ENCODE measurements at regions of chr1 and their contacts with region 1.

Region 1: GRCh38 chr1:240149484-240150094 is 57.9 kb downstream of the FMN2 start:
- DNase-seq: no peak
- H3K4me3 ChIP-seq: no peak overlapping the region
- H3K27ac ChIP-seq: no peak overlapping the region
- H3K4me1 ChIP-seq: no peaks in the 10 kb centered on the region
- H3K27me3 ChIP-seq: peaks cover 17% of the 10 kb centered on the region
- CTCF ChIP-seq: peak; percentile 72

Region 2: DNA sequence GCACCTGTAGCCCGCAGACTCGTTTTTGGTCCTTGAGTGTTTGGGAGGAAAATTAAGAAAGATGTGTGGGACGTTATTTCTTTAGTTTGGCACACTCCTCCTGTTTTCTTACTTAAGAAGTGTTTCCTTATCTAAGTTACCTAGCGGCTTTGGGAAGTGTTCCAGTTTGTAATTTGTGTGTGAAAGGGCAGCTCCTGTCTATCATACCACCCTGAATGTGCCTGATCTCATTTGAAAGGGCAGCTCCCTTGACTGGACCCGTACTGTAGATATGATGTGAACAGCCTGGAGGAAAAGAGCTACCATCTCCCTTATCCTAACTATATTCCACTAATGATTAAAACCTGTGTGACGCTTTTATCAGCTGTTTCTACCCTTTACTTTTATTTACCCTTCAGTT is 448.9 kb before region 1 on chr1:
- intact Hi-C with region 1: no loop called
- DNase-seq: no peak
- H3K4me3 ChIP-seq: no peak overlapping the region
- H3K27ac ChIP-seq: no peak overlapping the region
- H3K4me1 ChIP-seq: no peaks in the 10 kb centered on the region
- H3K27me3 ChIP-seq: no peaks in the 10 kb centered on the region
- CTCF ChIP-seq: no peak

Region 3: GRCh38 chr1:240027059-240027462 is 122.5 kb before region 1 on chr1:
- intact Hi-C with region 1: loop called (anchors 5 kb)
- DNase-seq: no peak
- H3K4me3 ChIP-seq: no peak overlapping the region
- H3K27ac ChIP-seq: no peak overlapping the region
- H3K4me1 ChIP-seq: no peaks in the 10 kb centered on the region
- H3K27me3 ChIP-seq: peaks cover 6% of the 10 kb centered on the region
- CTCF ChIP-seq: peak; percentile 87

Region 4: DNA sequence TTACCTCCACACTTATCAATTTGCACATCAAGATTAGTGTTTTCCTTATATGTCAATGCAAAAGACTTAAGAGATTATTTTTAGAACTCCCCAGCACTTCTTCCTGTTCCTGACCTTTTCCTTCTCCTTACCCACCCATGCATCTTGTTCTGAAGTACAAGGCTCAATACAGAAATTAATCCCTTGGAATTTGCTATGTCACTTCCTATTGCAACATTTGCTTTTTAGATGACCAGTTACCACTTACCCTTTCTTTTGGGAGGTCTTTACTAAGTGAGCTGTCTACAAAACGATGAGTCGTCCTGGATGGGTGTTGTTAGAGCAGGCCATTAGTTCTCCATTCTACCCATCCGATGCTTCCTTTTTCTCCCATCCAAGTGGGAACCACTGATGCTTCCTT is 163.3 kb after region 1 on chr1:
- intact Hi-C with region 1: no loop called
- DNase-seq: no peak
- H3K4me3 ChIP-seq: no peak overlapping the region
- H3K27ac ChIP-seq: no peak overlapping the region
- H3K4me1 ChIP-seq: no peaks in the 10 kb centered on the region
- H3K27me3 ChIP-seq: no peaks in the 10 kb centered on the region
- CTCF ChIP-seq: no peak

Region 5: DNA sequence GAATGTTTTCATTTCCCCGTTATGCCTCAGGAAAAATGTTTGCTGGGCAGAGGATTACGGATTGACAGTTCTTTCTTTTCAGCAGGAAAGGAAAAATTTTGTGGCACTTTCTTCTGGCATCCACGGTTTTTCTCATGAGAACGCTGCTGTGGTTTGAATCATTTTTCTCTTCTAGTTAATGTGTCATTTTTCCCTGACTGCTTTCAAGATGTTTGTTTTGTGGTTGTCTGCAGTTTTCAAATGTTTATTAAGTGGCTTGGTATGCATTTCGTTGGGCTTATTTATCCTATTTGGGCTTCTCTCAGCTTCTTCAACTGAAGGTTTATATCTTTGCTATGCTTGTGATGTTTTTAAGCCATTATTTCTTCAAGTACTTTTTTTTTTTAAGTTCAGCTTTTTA is 848.4 kb after region 1 on chr1:
- intact Hi-C with region 1: no loop called
- DNase-seq: no peak
- H3K4me3 ChIP-seq: no peak overlapping the region
- H3K27ac ChIP-seq: no peak overlapping the region
- H3K4me1 ChIP-seq: no peaks in the 10 kb centered on the region
- H3K27me3 ChIP-seq: no peaks in the 10 kb centered on the region
- CTCF ChIP-seq: no peak